Activated CD8-positive, alpha-beta T cell treated with anti-CD3 and anti-CD28 coated beads for 36 hours (primary cell): ENCODE measurements at regions of chr11 and their contacts with region 1.

Region 1: GRCh38 chr11:61516675-61517572 is 8.4 kb downstream of the LRRC10B start:
- DNase-seq: peak; percentile 74
- ATAC-seq: peak; percentile 88
- H3K4me3 Mint-ChIP-seq: peak overlapping the region; percentile 1
- H3K27ac Mint-ChIP-seq: no peak overlapping the region
- H3K4me1 Mint-ChIP-seq: peaks cover 6% of the 10 kb centered on the region
- H3K27me3 Mint-ChIP-seq: peaks cover 8% of the 10 kb centered on the region
- CTCF ChIP-seq: peak; percentile 99

Region 2: DNA sequence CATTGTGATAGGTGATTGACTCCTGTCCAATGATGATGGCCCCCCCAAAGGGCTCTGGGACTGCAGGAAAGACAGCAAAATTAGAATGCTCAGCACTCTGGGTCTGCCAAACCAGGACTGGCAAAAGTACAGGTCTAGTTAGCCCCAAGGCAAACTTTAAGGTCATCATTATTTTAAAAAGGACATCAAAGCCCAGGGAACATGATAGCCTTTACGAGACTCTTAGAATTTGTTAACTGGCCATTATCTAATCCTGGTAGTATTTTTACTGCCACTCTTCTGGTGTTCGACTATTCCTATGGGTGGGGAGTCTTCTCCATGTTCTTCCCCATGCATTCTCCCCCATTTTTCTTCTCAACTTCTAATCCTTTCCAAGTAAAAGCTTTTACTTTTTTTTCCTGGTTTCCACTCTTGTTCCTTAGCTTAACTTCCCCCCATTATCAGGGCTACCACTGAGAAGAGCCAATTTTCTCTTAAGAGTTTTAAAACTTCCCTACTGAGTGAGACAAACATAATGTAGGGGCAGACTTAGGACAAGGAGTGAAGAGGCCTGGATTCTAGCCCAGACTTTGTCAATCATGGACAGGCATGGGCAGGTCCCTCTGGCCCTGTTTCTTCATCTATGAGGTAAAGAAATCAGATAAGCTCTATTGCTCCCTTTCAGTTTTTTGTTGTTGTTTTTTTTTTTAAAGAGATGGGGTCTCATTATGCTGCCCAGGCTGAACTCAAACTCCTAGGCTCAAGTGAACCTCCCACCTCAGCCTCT is 191.1 kb before region 1 on chr11:
- CTCF ChIA-PET with region 1: no interaction called
- POLR2A ChIA-PET with region 1: no interaction called
- intact Hi-C with region 1: no loop called
- DNase-seq: no peak
- ATAC-seq: no peak
- H3K4me3 Mint-ChIP-seq: no peak overlapping the region
- H3K27ac Mint-ChIP-seq: no peak overlapping the region
- H3K4me1 Mint-ChIP-seq: peaks cover 29% of the 10 kb centered on the region
- H3K27me3 Mint-ChIP-seq: no peaks in the 10 kb centered on the region
- CTCF ChIP-seq: no peak

Region 3: GRCh38 chr11:61477727-61478148 is 39.2 kb before region 1 on chr11:
- CTCF ChIA-PET with region 1: interaction called, 253 read pairs
- POLR2A ChIA-PET with region 1: interaction called, 7 read pairs
- intact Hi-C with region 1: loop called (anchors 2 kb)
- DNase-seq: peak; percentile 70
- ATAC-seq: peak; percentile 64
- H3K4me3 Mint-ChIP-seq: no peak overlapping the region
- H3K27ac Mint-ChIP-seq: no peak overlapping the region
- H3K4me1 Mint-ChIP-seq: peaks cover 15% of the 10 kb centered on the region
- H3K27me3 Mint-ChIP-seq: peaks cover 2% of the 10 kb centered on the region
- CTCF ChIP-seq: peak; percentile 94

Region 4: DNA sequence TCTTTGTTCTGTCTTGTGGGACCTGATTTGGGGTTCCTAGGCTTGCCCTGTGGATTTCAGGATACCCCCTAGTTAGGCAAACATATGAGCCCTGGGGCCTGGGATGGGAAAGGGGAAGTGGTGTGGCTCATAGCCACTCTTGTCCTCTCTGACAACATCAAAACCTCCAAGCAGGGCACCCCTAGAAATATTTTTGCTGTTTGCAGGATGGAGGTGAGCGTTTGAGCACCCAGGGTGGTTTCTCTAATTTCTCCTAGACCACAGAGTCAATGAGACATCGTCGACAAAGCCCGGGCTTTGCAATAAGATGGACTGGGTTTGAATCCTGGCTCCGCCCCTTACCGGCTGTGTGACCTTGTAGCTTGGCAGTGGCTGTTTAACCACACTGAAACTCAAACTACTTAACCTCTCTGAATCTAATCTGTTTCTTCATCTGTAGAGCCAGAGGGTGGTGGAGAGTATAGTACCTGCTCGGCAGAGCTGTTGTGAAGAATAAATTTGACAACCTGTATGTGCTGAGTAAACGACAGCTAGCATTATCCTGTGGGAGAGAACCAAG is 13.6 kb before region 1 on chr11:
- CTCF ChIA-PET with region 1: interaction called, 28 read pairs
- POLR2A ChIA-PET with region 1: interaction called, 4 read pairs
- intact Hi-C with region 1: no loop called
- DNase-seq: no peak
- ATAC-seq: no peak
- H3K4me3 Mint-ChIP-seq: no peak overlapping the region
- H3K27ac Mint-ChIP-seq: no peak overlapping the region
- H3K4me1 Mint-ChIP-seq: no peaks in the 10 kb centered on the region
- H3K27me3 Mint-ChIP-seq: peaks cover 25% of the 10 kb centered on the region
- CTCF ChIP-seq: no peak

Region 5: DNA sequence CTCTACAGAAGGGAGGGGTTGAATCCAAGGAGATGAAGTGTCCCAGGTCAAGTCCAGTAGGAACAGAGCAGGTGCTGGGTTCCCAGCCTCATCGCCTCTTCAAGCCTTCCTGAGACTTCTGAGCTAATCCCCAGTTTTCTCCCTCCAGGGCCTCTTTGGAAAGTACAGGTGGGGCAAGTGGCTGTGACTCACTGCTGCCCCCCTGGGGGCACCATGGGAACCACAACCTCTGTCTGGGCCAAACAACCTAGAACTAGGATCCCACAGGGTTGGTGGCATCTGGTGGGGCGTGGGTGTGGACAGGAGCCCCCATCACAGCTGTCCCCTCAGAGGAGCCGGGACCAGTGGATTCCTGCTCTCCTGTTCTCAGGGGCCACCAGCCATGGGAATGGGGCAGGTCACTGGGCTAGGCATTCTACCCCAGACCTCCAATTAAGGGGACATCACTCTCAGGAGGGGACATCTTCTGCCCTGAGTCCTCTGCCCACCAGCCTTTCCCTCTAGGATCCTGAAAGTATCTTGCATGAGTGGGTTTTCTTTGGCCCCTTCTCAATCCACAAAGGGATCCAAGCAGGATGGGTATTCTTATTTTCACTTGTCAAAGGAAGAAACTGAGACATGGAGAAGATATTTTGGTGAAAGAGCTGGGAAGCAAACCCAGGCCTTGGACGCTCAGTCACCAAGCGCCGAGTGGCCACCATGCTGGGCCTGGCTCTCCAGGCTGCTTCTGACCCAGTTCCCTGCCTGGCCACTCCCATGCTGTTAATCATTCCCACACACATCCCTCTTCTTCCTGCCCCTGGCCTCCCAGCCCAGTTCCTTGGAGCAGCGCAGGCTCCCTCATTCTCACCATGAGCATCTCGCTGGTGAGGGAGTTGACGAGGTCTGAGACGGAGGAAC is 15.5 kb after region 1 on chr11:
- CTCF ChIA-PET with region 1: interaction called, 87 read pairs
- POLR2A ChIA-PET with region 1: no interaction called
- intact Hi-C with region 1: no loop called
- DNase-seq: peak; percentile 62
- ATAC-seq: peak; percentile 94
- H3K4me3 Mint-ChIP-seq: no peak overlapping the region
- H3K27ac Mint-ChIP-seq: no peak overlapping the region
- H3K4me1 Mint-ChIP-seq: no peaks in the 10 kb centered on the region
- H3K27me3 Mint-ChIP-seq: peaks cover 14% of the 10 kb centered on the region
- CTCF ChIP-seq: peak; percentile 84